Activated CD4-positive, alpha-beta memory T cell treated with anti-CD3 and anti-CD28 coated beads for 36 hours (primary cell): ENCODE measurements at regions of chr6 and their contacts with region 1.

Region 1: GRCh38 chr6:3258720-3259490 is at the start of gene PSMG4:
- DNase-seq: peak; percentile 96
- H3K4me3 Mint-ChIP-seq: peak within 1 kb of the TSS; percentile 92
- H3K27ac Mint-ChIP-seq: peak within 1 kb of the TSS; percentile 84
- H3K4me1 Mint-ChIP-seq: peaks cover 32% of the 10 kb centered on the region
- H3K27me3 Mint-ChIP-seq: no peaks in the 10 kb centered on the region
- total RNA-seq, gene PSMG4: 24.2 to 25.2 TPM

Region 2: GRCh38 chr6:3068329-3069214 is 190.3 kb before region 1 on chr6 and contains the start of gene RIPK1:
- CTCF ChIA-PET with region 1: interaction called, 6 read pairs
- POLR2A ChIA-PET with region 1: no interaction called
- intact Hi-C with region 1: loop called (anchors 2 kb)
- DNase-seq: peak; percentile 96
- H3K4me3 Mint-ChIP-seq: peak within 1 kb of the TSS; percentile 96
- H3K27ac Mint-ChIP-seq: peak within 1 kb of the TSS; percentile 98
- H3K4me1 Mint-ChIP-seq: peaks cover 62% of the 10 kb centered on the region
- H3K27me3 Mint-ChIP-seq: no peaks in the 10 kb centered on the region
- total RNA-seq, gene RIPK1: 18.5 to 18.6 TPM

Region 3: GRCh38 chr6:3125815-3126214 is 133.1 kb before region 1 on chr6:
- CTCF ChIA-PET with region 1: interaction called, 122 read pairs
- POLR2A ChIA-PET with region 1: no interaction called
- intact Hi-C with region 1: loop called (anchors 2 kb)
- DNase-seq: no peak
- H3K4me3 Mint-ChIP-seq: no peak overlapping the region
- H3K27ac Mint-ChIP-seq: no peak overlapping the region
- H3K4me1 Mint-ChIP-seq: peaks cover 7% of the 10 kb centered on the region
- H3K27me3 Mint-ChIP-seq: no peaks in the 10 kb centered on the region

Region 4: GRCh38 chr6:3390698-3391097 is 131.8 kb after region 1 on chr6:
- CTCF ChIA-PET with region 1: no interaction called
- POLR2A ChIA-PET with region 1: no interaction called
- intact Hi-C with region 1: no loop called
- DNase-seq: no peak
- H3K4me3 Mint-ChIP-seq: no peak overlapping the region
- H3K27ac Mint-ChIP-seq: no peak overlapping the region
- H3K4me1 Mint-ChIP-seq: no peaks in the 10 kb centered on the region
- H3K27me3 Mint-ChIP-seq: no peaks in the 10 kb centered on the region